B cell (primary cell): ENCODE measurements at regions of chr6 and their contacts with region 1.

Region 1: DNA sequence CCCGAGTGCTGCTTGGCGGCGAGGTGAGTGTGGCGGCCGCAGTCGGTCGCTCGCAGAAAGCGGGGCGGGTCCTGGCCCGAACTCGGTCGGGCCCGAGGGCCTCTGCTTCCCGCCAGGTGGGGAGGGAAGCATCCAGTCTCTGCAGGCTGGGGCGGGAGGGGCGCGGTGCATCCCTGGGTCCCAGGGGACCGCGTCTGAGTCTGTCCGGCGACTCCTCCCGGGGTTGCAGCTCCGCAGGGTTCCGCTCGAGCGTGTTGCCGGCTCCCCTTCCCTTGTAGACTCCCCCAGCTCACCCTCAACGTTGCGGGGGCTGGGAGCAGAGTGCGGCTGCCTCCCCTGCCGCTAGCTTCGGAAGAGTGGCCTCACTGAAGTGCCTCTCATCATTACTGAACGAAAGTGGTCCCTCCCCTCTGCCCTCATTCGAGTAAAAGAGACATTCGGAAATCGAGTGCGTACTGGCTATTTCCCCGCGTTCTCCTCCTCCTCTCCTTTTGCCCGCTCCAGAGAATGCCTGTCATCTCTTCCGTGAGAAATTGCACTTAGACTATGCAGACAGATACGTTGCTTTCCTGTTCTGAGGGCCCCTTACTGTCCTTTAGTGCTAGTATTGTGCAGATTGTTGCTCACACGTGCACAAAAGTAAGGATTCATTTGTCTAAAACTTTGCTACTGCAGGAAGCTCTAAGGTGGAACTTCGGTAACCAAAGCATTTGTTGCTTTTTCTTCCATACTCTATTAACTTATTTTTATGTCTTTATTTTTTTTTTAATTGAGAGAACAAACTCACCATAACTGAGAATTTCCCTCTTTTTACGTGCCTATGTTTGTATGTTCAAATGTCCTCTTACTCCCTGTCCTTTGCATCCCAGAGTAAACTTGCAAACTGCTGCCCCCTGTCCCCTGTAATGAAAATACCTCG is 751 bp downstream of the MAP3K4 start:
- DNase-seq: peak; percentile 43
- ATAC-seq: peak; percentile 61
- H3K4me3 ChIP-seq: peak overlapping the region; percentile 75 to 92 (median 82)
- H3K4me3 Mint-ChIP-seq: peak overlapping the region; percentile 99
- H3K27ac ChIP-seq: peak overlapping the region; percentile 65 to 81
- H3K27ac Mint-ChIP-seq: peak overlapping the region; percentile 95
- H3K4me1 ChIP-seq: peaks cover 6 to 14% of the 10 kb centered on the region in 2 donors
- H3K4me1 Mint-ChIP-seq: peaks cover 44% of the 10 kb centered on the region
- H3K27me3 ChIP-seq: no peaks in the 10 kb centered on the region
- H3K27me3 Mint-ChIP-seq: peaks cover 7% of the 10 kb centered on the region
- CTCF ChIP-seq: peak; percentile 29

Region 2: GRCh38 chr6:160733050-160733646 is 259.2 kb before region 1 on chr6:
- CTCF ChIA-PET with region 1: no interaction called
- POLR2A ChIA-PET with region 1: no interaction called
- intact Hi-C with region 1: loop called (anchors 5 kb)
- DNase-seq: peak; percentile 55
- ATAC-seq: peak; percentile 62
- H3K4me3 ChIP-seq: no peak overlapping the region
- H3K4me3 Mint-ChIP-seq: no peak overlapping the region
- H3K27ac ChIP-seq: no peak overlapping the region
- H3K27ac Mint-ChIP-seq: no peak overlapping the region
- H3K4me1 ChIP-seq: no peaks in the 10 kb centered on the region
- H3K4me1 Mint-ChIP-seq: no peaks in the 10 kb centered on the region
- H3K27me3 ChIP-seq: peaks cover 0 to 9% (median 3%) of the 10 kb centered on the region in 4 experiments
- H3K27me3 Mint-ChIP-seq: peaks cover 42% of the 10 kb centered on the region
- CTCF ChIP-seq: peak; percentile 75

Region 3: DNA sequence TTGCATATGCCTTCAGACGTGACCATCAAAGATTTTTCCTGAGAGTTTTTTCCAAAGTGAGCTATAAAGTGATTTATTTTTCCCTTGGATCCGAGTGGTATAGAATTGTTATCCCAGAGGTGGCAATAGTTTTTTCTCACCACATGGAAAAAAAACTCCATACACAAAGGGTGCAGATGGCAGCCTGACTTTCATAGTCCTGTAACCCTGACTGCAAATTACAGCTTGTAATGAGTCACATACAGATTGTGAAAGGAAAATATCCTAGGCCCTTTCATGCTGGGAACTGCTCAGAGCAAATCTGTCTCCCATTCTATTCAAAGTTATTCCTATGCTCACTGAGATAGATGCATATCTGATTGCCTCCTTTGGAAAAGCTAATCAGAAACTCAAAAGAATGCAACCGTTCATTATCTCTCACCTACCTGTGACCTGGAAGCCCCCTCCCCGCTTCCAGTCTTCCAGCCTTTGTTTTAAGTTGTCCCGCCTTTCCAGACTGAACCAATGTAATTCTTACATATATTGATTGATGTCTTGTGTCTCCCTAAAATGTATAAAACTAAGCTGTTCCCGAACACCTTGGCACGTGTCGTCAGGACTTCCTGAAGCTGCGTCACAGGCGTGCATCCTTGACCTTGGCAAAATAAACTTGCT is 109.5 kb before region 1 on chr6:
- CTCF ChIA-PET with region 1: no interaction called
- POLR2A ChIA-PET with region 1: no interaction called
- intact Hi-C with region 1: no loop called
- DNase-seq: no peak
- ATAC-seq: no peak
- H3K4me3 ChIP-seq: no peak overlapping the region
- H3K4me3 Mint-ChIP-seq: no peak overlapping the region
- H3K27ac ChIP-seq: no peak overlapping the region
- H3K27ac Mint-ChIP-seq: no peak overlapping the region
- H3K4me1 ChIP-seq: no peaks in the 10 kb centered on the region
- H3K4me1 Mint-ChIP-seq: no peaks in the 10 kb centered on the region
- H3K27me3 ChIP-seq: no peaks in the 10 kb centered on the region
- H3K27me3 Mint-ChIP-seq: no peaks in the 10 kb centered on the region
- CTCF ChIP-seq: no peak

Region 4: DNA sequence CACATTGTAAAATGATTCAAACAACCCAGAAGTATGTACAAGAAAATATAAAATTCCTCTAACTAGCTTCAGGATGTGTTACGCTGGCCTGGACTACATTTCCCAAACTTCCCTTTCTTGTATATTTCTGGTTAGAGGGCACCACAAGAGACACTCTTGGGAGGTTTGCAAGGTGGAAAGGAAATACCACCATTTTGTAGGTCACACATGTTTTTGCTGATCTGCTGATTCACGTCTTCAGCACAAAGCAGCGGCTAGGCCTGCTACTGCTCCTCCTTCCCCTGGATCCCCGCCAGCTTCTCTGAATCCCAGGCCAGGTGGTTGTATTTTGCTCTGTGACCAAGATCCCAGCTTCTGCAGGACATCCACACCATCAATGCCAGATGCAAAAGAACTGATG is 177.4 kb after region 1 on chr6:
- CTCF ChIA-PET with region 1: no interaction called
- POLR2A ChIA-PET with region 1: no interaction called
- intact Hi-C with region 1: loop called (anchors 5 kb)
- DNase-seq: no peak
- ATAC-seq: no peak
- H3K4me3 ChIP-seq: peak overlapping the region in 1 of 5 experiments; percentile 15
- H3K4me3 Mint-ChIP-seq: peak overlapping the region; percentile 79
- H3K27ac ChIP-seq: peak overlapping the region in 1 of 2 donors; percentile 39
- H3K27ac Mint-ChIP-seq: peak overlapping the region; percentile 78
- H3K4me1 ChIP-seq: peaks cover 29 to 30% of the 10 kb centered on the region in 2 donors
- H3K4me1 Mint-ChIP-seq: peaks cover 31% of the 10 kb centered on the region
- H3K27me3 ChIP-seq: no peaks in the 10 kb centered on the region
- H3K27me3 Mint-ChIP-seq: no peaks in the 10 kb centered on the region
- CTCF ChIP-seq: no peak

Region 5: DNA sequence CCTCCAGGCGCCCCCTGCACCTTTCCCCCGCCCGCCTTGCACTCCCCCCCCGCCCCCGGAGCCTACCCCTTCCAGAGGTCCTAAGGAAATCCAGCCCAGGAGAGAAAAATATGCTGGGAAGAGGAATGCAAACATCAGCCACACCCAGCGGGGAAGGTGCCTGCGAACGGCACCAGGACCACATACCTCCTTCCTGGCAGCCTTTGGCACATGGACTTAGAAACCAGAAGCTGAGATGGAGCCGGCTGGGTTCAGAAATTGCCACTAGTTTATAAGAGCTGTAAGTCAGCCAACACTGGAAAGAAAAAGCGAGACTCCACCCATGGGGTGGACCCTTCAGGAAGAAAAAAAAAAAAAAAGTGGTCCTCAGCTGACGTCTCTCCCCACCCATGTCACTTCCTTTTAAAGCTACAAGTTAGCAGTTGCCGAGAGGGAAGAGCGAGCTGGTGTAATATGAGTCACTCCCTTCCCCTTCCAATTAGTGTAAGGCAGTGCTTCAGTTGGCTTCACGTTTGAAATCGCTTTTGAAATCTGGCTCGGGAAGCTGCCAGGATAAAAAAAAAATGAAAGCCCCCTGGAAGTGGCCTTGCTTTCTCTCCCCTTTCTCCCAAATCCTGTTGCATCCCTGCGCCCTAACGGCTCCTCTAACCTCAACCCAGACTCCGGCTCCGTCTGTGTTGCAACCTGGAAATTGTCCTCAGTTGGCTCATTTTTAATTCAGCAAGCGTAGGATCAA is 281.6 kb after region 1 on chr6 and contains the start of gene AGPAT4:
- CTCF ChIA-PET with region 1: no interaction called
- POLR2A ChIA-PET with region 1: no interaction called
- intact Hi-C with region 1: loop called (anchors 2 kb)
- DNase-seq: peak; percentile 88
- ATAC-seq: peak; percentile 97
- H3K4me3 ChIP-seq: peak within 1 kb of the TSS; percentile 48 to 91 (median 73)
- H3K4me3 Mint-ChIP-seq: peak within 1 kb of the TSS; percentile 90
- H3K27ac ChIP-seq: peak within 1 kb of the TSS; percentile 65 to 74
- H3K27ac Mint-ChIP-seq: peak within 1 kb of the TSS; percentile 83
- H3K4me1 ChIP-seq: peaks cover 6 to 15% of the 10 kb centered on the region in 2 donors
- H3K4me1 Mint-ChIP-seq: peaks cover 18% of the 10 kb centered on the region
- H3K27me3 ChIP-seq: peaks cover 0 to 5% (median 0%) of the 10 kb centered on the region in 4 experiments
- H3K27me3 Mint-ChIP-seq: peaks cover 18% of the 10 kb centered on the region
- CTCF ChIP-seq: no peak
- total RNA-seq, gene AGPAT4: 6.0 and 6.1 TPM in 2 replicates

Region 6: GRCh38 chr6:161370880-161371279 is 378.6 kb after region 1 on chr6:
- CTCF ChIA-PET with region 1: no interaction called
- POLR2A ChIA-PET with region 1: no interaction called
- intact Hi-C with region 1: no loop called
- DNase-seq: peak; percentile 72
- ATAC-seq: peak; percentile 64
- H3K4me3 ChIP-seq: no peak overlapping the region
- H3K4me3 Mint-ChIP-seq: no peak overlapping the region
- H3K27ac ChIP-seq: no peak overlapping the region
- H3K27ac Mint-ChIP-seq: no peak overlapping the region
- H3K4me1 ChIP-seq: no peaks in the 10 kb centered on the region
- H3K4me1 Mint-ChIP-seq: no peaks in the 10 kb centered on the region
- H3K27me3 ChIP-seq: no peaks in the 10 kb centered on the region
- H3K27me3 Mint-ChIP-seq: peaks cover 3% of the 10 kb centered on the region
- CTCF ChIP-seq: peak; percentile 95

Region 7: GRCh38 chr6:162727309-162728182 is 1735.2 kb after region 1 on chr6 and contains the starts of genes PACRG and PRKN:
- CTCF ChIA-PET with region 1: no interaction called
- POLR2A ChIA-PET with region 1: no interaction called
- intact Hi-C with region 1: loop called (anchors 5 kb)
- DNase-seq: peak; percentile 99
- ATAC-seq: peak; percentile 92
- H3K4me3 ChIP-seq: peak within 1 kb of the TSS; percentile 15 to 87 (median 76)
- H3K4me3 Mint-ChIP-seq: peak within 1 kb of the TSS; percentile 96
- H3K27ac ChIP-seq: peak within 1 kb of the TSS; percentile 59 to 85
- H3K27ac Mint-ChIP-seq: peak within 1 kb of the TSS; percentile 91
- H3K4me1 ChIP-seq: peaks cover 8 to 13% of the 10 kb centered on the region in 2 donors
- H3K4me1 Mint-ChIP-seq: peaks cover 12% of the 10 kb centered on the region
- H3K27me3 ChIP-seq: no peaks in the 10 kb centered on the region
- H3K27me3 Mint-ChIP-seq: no peaks in the 10 kb centered on the region
- CTCF ChIP-seq: no peak
- total RNA-seq, gene PACRG: not detected in 2 replicates
- total RNA-seq, gene PRKN: 6.2 and 6.7 TPM in 2 replicates